Mammary epithelial cell (primary cell): ENCODE measurements at regions of chr1 and their contacts with region 1.

Region 1: GRCh38 chr1:30473922-30474817 is 249.2 kb downstream of the MATN1 start:
- DNase-seq: no peak
- H3K4me3 ChIP-seq: no peak overlapping the region
- H3K27ac ChIP-seq: no peak overlapping the region
- H3K4me1 ChIP-seq: no peaks in the 10 kb centered on the region
- H3K27me3 ChIP-seq: no peaks in the 10 kb centered on the region
- CTCF ChIP-seq: no peak

Region 2: GRCh38 chr1:30540611-30541192 is 66.5 kb after region 1 on chr1:
- CTCF ChIA-PET with region 1: no interaction called
- dilution Hi-C with region 1: loop called (anchors 5 kb)
- in situ Hi-C with region 1: no loop called
- intact Hi-C with region 1: no loop called
- DNase-seq: no peak
- H3K4me3 ChIP-seq: no peak overlapping the region
- H3K27ac ChIP-seq: no peak overlapping the region
- H3K4me1 ChIP-seq: no peaks in the 10 kb centered on the region
- H3K27me3 ChIP-seq: no peaks in the 10 kb centered on the region
- CTCF ChIP-seq: no peak

Region 3: DNA sequence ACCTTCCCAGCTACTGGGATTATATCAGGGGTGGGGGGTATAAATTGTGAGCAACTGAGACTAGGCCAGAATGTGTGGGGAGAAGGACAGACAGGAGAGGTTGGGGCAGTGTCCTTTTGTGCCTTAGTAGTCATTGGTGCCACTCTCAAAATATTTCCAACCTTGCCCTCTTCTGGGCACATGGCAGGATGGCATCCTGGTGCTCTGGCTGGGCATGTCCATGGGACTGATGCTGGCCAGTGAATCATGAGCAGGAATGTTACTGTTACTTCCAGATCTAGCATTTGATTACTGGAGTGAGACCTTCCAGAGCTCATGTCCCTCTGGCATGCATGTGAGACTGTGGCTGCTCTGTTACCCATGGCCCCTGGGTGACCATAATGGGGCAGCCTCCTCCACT is 98.0 kb after region 1 on chr1:
- CTCF ChIA-PET with region 1: no interaction called
- dilution Hi-C with region 1: no loop called
- in situ Hi-C with region 1: no loop called
- intact Hi-C with region 1: no loop called
- DNase-seq: peak; percentile 58
- H3K4me3 ChIP-seq: no peak overlapping the region
- H3K27ac ChIP-seq: no peak overlapping the region
- H3K4me1 ChIP-seq: peaks cover 20% of the 10 kb centered on the region
- H3K27me3 ChIP-seq: no peaks in the 10 kb centered on the region
- CTCF ChIP-seq: peak; percentile 48 to 67